PC-9 (cell line): ENCODE measurements at regions of chr17 and their contacts with region 1.

Region 1: GRCh38 chr17:20206068-20206467 is 196.9 kb downstream of the SPECC1 start:
- DNase-seq: peak in 1 of 2 experiments; percentile 14
- H3K4me3 ChIP-seq: no peak overlapping the region
- H3K27ac ChIP-seq: 0 out of 2 replicates have a peak overlapping the region, but pooled peaks have one; percentile 2
- H3K4me1 ChIP-seq: peaks cover 54% of the 10 kb centered on the region
- H3K27me3 ChIP-seq: no peaks in the 10 kb centered on the region
- CTCF ChIP-seq: no peak

Region 2: DNA sequence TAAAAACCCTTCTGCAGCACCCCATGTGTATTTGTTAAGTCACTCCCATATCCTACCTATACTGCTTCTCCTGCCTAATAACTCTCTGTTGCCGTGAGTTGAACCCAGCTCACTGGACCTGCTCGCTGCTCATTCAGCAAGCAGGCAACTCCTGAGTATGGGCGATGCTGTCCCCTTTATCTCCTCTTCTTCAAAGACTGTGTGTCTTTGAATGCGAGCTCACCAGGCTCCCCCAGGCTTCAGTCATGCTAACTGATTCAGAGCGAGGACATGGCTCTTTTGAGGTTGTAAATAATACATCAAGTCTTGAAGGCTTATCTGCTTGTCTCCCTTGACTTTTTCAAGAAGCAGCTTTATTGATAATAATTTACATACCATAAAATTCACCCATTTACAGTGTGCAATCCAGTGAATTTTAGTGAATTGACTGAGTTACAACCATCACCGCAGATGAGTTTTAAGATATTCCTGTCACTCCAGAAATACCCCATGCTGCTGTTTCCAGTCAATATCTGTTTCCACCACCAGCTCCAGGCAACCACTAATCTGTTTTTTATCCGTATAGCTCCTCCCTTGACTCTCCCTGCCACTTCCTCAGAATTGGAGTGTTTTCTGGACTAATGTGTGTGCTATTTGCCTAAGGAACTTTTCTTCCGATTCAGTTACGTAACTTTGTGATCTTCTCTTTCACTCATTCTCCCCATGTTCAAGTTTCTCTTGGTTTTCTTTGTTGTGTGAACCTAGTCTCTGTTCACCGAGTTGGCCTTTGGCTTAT is 64.7 kb before region 1 on chr17:
- CTCF ChIA-PET with region 1: no interaction called
- POLR2A ChIA-PET with region 1: no interaction called
- intact Hi-C with region 1: no loop called
- DNase-seq: no peak
- H3K4me3 ChIP-seq: no peak overlapping the region
- H3K27ac ChIP-seq: no peak overlapping the region
- H3K4me1 ChIP-seq: no peaks in the 10 kb centered on the region
- H3K27me3 ChIP-seq: no peaks in the 10 kb centered on the region
- CTCF ChIP-seq: no peak

Region 3: DNA sequence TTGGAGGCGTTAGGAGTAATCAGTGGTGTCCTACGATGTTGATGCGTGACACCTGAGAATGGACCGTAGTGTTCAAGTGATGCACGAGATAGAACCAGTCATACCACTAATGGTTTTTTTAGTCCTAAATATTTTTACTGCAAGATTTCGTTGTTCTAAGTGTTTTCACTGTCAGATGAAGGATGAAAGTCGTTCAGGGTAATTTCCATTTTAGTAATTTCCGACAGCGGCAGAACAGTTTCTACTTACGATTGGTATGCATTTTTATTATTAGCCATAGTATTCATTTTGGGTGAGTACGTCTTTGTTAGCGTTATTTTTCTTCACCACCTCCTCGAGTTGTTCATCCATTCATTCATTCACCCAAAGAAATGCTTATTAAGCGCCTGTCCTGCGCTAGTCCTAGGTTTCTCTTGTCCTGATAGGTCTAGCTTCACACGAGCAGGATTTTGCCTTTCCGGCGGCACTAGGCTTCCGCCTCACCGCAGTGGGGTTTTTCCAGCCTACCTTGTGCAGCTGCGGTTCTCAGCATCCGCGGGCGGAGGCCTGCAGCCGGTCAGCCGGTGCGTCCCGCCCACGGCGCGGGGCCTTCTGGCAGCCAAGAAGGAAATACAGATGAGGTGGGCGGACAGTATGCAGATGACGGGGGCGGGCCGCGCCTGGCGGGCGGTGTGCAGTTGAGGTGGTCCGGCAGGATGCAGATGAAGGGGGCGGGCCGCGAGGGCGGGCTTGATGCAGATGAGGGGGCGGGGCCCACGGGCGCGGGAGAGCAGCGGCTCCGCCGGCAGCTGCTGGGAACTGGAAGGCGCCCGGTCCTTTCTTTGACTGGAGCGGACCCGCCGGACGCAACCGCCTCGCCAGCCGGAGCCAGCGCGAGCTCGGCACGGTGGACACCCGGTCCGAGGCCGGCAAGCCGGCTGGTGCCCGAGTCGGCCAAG is 50.5 kb before region 1 on chr17:
- CTCF ChIA-PET with region 1: no interaction called
- POLR2A ChIA-PET with region 1: interaction called, 8 read pairs
- intact Hi-C with region 1: loop called (anchors 5 kb)
- DNase-seq: peak; percentile 95 to 100
- H3K4me3 ChIP-seq: peak overlapping the region; percentile 92
- H3K27ac ChIP-seq: peak overlapping the region; percentile 88
- H3K4me1 ChIP-seq: peaks cover 31% of the 10 kb centered on the region
- H3K27me3 ChIP-seq: no peaks in the 10 kb centered on the region
- CTCF ChIP-seq: no peak

Region 4: GRCh38 chr17:20184191-20184590 is 21.9 kb before region 1 on chr17:
- CTCF ChIA-PET with region 1: interaction called, 14 read pairs
- POLR2A ChIA-PET with region 1: interaction called, 7 read pairs
- intact Hi-C with region 1: no loop called
- DNase-seq: no peak
- H3K4me3 ChIP-seq: no peak overlapping the region
- H3K27ac ChIP-seq: peak overlapping the region; percentile 41; the same call in 1 of the 2 replicates
- H3K4me1 ChIP-seq: peaks cover 20% of the 10 kb centered on the region
- H3K27me3 ChIP-seq: no peaks in the 10 kb centered on the region
- CTCF ChIP-seq: no peak

Region 5: GRCh38 chr17:20189302-20189701 is 16.8 kb before region 1 on chr17:
- CTCF ChIA-PET with region 1: interaction called, 14 read pairs
- POLR2A ChIA-PET with region 1: no interaction called
- intact Hi-C with region 1: no loop called
- DNase-seq: peak in 1 of 2 experiments; percentile 49
- H3K4me3 ChIP-seq: no peak overlapping the region
- H3K27ac ChIP-seq: no peak overlapping the region
- H3K4me1 ChIP-seq: peaks cover 12% of the 10 kb centered on the region
- H3K27me3 ChIP-seq: no peaks in the 10 kb centered on the region
- CTCF ChIP-seq: no peak

Region 6: DNA sequence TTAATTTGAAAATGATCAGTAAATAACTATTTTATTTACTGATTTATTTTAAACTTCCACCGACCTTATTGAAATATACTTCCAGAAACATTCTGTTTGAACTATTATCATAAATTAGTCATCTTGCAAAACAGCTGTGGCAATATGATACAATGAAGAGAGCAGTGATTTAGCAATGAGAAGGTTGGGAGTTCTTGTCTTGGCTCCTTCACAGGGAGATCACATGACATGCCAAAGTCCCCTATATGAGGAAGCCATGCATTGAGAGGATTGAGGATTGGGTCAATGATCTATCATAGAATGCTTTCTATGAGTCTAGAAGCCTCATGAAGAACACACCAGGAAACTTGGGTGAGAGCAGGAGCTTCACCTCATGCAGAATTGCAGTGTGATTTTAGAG is 38.6 kb after region 1 on chr17:
- CTCF ChIA-PET with region 1: no interaction called
- POLR2A ChIA-PET with region 1: no interaction called
- intact Hi-C with region 1: no loop called
- DNase-seq: no peak
- H3K4me3 ChIP-seq: no peak overlapping the region
- H3K27ac ChIP-seq: no peak overlapping the region
- H3K4me1 ChIP-seq: no peaks in the 10 kb centered on the region
- H3K27me3 ChIP-seq: no peaks in the 10 kb centered on the region
- CTCF ChIP-seq: no peak

Region 7: DNA sequence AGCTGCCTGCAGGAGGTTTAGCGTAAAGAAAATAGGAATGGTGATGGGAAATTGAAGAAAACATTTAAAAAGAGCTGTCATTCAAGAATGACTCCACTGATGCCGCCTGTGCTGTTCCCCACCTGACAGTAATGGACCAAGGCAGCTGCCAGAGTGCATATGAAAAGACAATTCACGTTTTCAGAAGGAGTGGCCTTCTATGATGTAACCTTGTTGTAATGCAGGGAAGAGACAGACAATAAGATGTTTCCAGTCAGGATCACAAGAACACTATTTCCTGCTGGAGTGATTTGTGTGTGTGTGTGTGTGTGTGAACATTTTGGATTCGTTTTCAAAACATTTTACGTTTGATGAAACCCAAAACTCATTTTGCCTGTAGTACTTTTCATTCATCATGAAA is 57.5 kb after region 1 on chr17:
- CTCF ChIA-PET with region 1: no interaction called
- POLR2A ChIA-PET with region 1: no interaction called
- intact Hi-C with region 1: no loop called
- DNase-seq: no peak
- H3K4me3 ChIP-seq: no peak overlapping the region
- H3K27ac ChIP-seq: no peak overlapping the region
- H3K4me1 ChIP-seq: no peaks in the 10 kb centered on the region
- H3K27me3 ChIP-seq: no peaks in the 10 kb centered on the region
- CTCF ChIP-seq: no peak